ENCODE measurements at regions of chr9 and their contacts with region 1.

Region 1: DNA sequence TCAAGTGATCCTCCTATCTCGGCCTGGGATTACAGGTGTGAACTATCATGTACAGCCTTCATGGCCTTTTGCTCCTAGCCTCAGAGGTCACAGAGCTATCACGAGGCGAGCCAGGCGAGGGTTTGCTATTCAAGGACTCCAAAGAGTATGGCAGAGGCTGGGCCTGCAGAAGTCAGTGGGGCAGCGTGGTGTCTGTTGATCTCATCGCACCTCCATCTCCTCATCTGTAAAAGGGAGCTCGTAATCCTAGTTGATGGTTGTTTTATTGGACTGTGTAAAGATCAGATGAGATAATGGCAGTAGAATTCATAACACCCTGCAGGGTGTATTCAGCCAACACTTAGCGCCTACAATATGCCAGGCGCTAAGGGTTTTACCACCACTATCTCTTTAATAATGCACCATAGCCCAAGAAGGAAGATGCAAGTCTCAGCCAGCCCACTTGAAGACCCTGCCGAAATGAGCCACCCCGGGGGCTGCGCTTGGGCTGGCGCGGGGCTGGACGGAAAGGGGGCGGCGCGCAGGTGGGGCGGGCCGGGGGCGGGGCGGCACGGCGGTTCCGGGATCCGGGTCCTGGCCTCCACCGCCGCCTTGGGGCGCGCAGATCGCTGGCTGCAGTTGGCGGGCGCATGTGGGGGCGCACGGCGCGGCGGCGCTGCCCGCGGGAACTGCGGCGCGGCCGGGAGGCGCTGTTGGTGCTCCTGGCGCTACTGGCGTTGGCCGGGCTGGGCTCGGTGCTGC is at the start of gene GALNT12:
- DNase-seq: peak; percentile 22 to 81 (median 62)
- ATAC-seq: peak; percentile 90
- H3K4me3 ChIP-seq: peak within 1 kb of the TSS; percentile 66 to 68
- H3K4me3 Mint-ChIP-seq: peak within 1 kb of the TSS; percentile 87
- H3K27ac ChIP-seq: no peak within 1 kb of the TSS
- H3K27ac Mint-ChIP-seq: peak within 1 kb of the TSS; percentile 57
- H3K4me1 ChIP-seq: peaks cover 10% of the 10 kb centered on the region
- H3K4me1 Mint-ChIP-seq: peaks cover 27% of the 10 kb centered on the region
- H3K27me3 ChIP-seq: no peaks in the 10 kb centered on the region
- H3K27me3 Mint-ChIP-seq: peaks cover 3% of the 10 kb centered on the region
- CTCF ChIP-seq: no peak
- total RNA-seq, gene GALNT12: 7.9 to 9.0 TPM

Region 2: DNA sequence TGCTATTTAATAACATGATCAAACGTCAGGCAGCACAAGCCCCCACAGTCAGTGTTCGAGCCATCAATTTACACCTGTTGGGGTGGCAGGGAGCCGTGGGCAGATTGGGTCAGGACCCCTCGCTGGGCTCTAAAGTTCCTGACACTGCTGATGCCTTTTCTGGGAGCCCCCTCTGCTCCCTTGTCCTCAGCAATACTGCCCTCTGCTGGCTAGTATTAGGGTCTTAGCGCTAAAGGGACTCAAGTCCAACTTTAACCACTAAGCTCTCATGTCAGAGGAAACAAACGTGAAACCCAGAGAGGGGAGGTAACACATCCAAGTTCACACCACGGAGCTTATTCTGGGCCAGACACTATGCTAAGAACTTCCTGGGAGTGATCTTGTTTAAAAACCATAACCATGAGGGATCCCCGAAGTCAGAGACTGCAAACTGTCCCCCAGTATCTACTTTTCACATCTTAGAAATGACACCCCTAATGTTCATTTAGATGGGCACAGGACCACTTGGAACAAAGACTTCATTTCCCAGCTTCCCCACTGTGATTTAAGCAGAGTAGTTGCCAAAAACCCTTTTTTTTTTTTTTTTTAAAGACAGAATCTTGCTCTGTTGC is 31.3 kb before region 1 on chr9:
- CTCF ChIA-PET with region 1: interaction called, 17 read pairs
- POLR2A ChIA-PET with region 1: no interaction called
- intact Hi-C with region 1: no loop called
- DNase-seq: peak in 4 of 9 experiments; percentile 28 to 59 (median 46)
- ATAC-seq: no peak
- H3K4me3 ChIP-seq: no peak overlapping the region
- H3K4me3 Mint-ChIP-seq: no peak overlapping the region
- H3K27ac ChIP-seq: no peak overlapping the region
- H3K27ac Mint-ChIP-seq: no peak overlapping the region
- H3K4me1 ChIP-seq: no peaks in the 10 kb centered on the region
- H3K4me1 Mint-ChIP-seq: no peaks in the 10 kb centered on the region
- H3K27me3 ChIP-seq: no peaks in the 10 kb centered on the region
- H3K27me3 Mint-ChIP-seq: no peaks in the 10 kb centered on the region
- CTCF ChIP-seq: no peak

Region 3: DNA sequence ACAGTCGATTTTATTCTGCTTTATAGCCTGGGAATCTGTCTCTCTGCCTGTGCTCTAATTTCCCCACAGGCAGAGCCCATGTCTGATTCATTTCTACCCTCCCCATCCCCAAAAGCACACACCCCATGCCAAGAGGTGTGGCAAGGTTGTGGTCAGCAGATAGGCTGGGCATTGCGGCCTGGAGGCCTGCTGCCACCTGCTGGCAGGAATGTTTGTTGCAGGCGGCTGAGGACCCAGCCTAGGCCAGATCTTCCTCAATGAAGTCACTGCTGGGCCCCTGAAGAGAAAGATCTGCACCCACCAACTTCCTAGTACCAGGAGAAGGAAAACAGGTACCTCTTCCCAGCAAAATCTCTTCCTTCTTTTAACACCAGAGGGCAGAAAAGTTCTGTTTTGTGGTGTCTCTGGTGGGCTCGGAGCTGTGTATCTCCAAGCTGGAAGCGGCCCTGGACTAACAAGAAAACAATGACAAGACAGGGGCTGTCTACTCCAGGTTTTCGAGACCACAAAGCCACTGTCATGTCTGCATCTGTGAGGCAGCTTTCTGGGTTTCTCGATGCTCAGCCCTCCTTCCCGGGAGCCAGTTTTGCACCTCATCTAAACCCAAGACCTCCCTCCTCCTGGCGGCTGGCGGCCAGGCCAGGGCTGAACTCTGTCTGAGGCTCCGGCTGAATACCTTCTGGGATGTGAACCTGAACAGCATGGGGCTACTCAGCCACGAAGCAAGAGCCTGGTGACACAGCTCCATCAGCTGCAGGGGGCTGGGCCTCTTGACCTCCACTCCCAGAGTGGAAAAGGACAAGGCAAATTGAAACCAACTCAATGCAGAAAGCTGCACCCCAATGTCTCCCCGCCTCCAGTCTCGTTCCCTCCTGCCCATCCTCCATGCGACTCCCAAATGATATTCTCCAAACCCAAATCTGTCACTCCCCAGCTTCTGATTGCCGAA is 15.8 kb before region 1 on chr9:
- CTCF ChIA-PET with region 1: interaction called, 30 read pairs
- POLR2A ChIA-PET with region 1: interaction called, 5 read pairs
- intact Hi-C with region 1: loop called in 1 of 2 experiments (anchors 1 kb)
- DNase-seq: peak; percentile 21 to 73 (median 53)
- ATAC-seq: peak; percentile 75
- H3K4me3 ChIP-seq: no peak overlapping the region
- H3K4me3 Mint-ChIP-seq: no peak overlapping the region
- H3K27ac ChIP-seq: no peak overlapping the region
- H3K27ac Mint-ChIP-seq: no peak overlapping the region
- H3K4me1 ChIP-seq: peaks cover 15% of the 10 kb centered on the region
- H3K4me1 Mint-ChIP-seq: peaks cover 31% of the 10 kb centered on the region
- H3K27me3 ChIP-seq: no peaks in the 10 kb centered on the region
- H3K27me3 Mint-ChIP-seq: no peaks in the 10 kb centered on the region
- CTCF ChIP-seq: peak; percentile 91

Region 4: DNA sequence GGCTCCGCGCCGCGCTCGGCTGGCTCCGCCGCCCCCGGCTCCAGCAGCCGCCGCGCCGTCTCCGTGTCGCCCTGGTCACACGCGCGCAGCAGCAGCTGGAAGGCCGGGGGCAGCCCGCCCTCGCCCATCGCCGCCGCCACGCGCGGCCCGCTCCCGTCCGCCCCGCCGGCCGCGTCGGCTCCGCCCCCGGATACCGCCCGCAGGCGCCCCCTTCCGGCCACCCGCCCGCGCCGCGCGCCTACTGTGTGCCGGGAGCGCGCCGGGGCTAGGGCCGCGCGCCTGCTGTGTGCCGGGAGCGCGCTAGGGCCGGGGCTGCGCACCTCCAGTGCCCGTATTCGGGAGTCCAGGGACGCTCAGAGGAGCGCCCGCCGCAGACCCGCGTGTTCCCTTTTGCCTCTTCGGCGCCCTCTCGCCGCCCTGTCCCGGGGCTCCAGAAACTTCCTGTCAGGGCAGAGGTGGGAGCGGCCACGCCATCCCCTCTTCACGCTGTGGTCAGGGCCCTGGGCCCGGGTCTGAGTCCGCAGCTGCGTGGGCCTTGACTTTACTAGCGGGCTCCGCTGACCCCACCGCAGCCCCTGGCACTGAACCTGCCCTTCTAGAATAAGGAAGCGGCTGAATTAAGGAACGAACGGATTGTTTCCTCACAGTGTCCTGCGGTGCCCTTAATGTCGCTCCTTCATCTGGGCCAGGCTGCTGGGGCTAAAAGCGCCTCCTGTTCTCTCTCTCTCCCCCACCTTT is 10.7 kb before region 1 on chr9 and contains the start of gene ANKS6:
- CTCF ChIA-PET with region 1: interaction called, 30 read pairs
- POLR2A ChIA-PET with region 1: interaction called, 5 read pairs
- intact Hi-C with region 1: loop called in 1 of 2 experiments (anchors 1 kb)
- DNase-seq: peak; percentile 63 to 91 (median 85)
- ATAC-seq: peak; percentile 92
- H3K4me3 ChIP-seq: peak within 1 kb of the TSS; percentile 77 to 95
- H3K4me3 Mint-ChIP-seq: peak within 1 kb of the TSS; percentile 88
- H3K27ac ChIP-seq: peak within 1 kb of the TSS; percentile 61 to 66
- H3K27ac Mint-ChIP-seq: peak within 1 kb of the TSS; percentile 85
- H3K4me1 ChIP-seq: peaks cover 15% of the 10 kb centered on the region
- H3K4me1 Mint-ChIP-seq: peaks cover 32% of the 10 kb centered on the region
- H3K27me3 ChIP-seq: no peaks in the 10 kb centered on the region
- H3K27me3 Mint-ChIP-seq: no peaks in the 10 kb centered on the region
- CTCF ChIP-seq: peak; percentile 28
- total RNA-seq, gene ANKS6: 10.6 to 12.7 TPM

Region 5: GRCh38 chr9:98944057-98944733 is 137.0 kb after region 1 on chr9:
- CTCF ChIA-PET with region 1: no interaction called
- POLR2A ChIA-PET with region 1: no interaction called
- intact Hi-C with region 1: no loop called
- DNase-seq: no peak
- ATAC-seq: no peak
- H3K4me3 ChIP-seq: no peak overlapping the region
- H3K4me3 Mint-ChIP-seq: peak overlapping the region; percentile 18
- H3K27ac ChIP-seq: no peak overlapping the region
- H3K27ac Mint-ChIP-seq: no peak overlapping the region
- H3K4me1 ChIP-seq: peaks cover 3% of the 10 kb centered on the region
- H3K4me1 Mint-ChIP-seq: peaks cover 5% of the 10 kb centered on the region
- H3K27me3 ChIP-seq: peaks cover 0 to 14% of the 10 kb centered on the region in 2 experiments
- H3K27me3 Mint-ChIP-seq: peaks cover 55% of the 10 kb centered on the region
- CTCF ChIP-seq: no peak

Region 6: GRCh38 chr9:99130069-99130468 is 322.8 kb after region 1 on chr9:
- CTCF ChIA-PET with region 1: interaction called, 3 read pairs
- POLR2A ChIA-PET with region 1: no interaction called
- intact Hi-C with region 1: loop called in 1 of 2 experiments (anchors 10 kb)
- DNase-seq: no peak
- ATAC-seq: no peak
- H3K4me3 ChIP-seq: no peak overlapping the region
- H3K4me3 Mint-ChIP-seq: peak overlapping the region; percentile 38
- H3K27ac ChIP-seq: peak overlapping the region in 1 of 2 experiments; percentile 38
- H3K27ac Mint-ChIP-seq: peak overlapping the region; percentile 85
- H3K4me1 ChIP-seq: peaks cover 88% of the 10 kb centered on the region
- H3K4me1 Mint-ChIP-seq: peaks cover 86% of the 10 kb centered on the region
- H3K27me3 ChIP-seq: no peaks in the 10 kb centered on the region
- H3K27me3 Mint-ChIP-seq: no peaks in the 10 kb centered on the region
- CTCF ChIP-seq: no peak

Region 7: GRCh38 chr9:99221621-99222415 is 414.6 kb after region 1 on chr9 and contains the starts of genes ALG2 and SEC61B:
- CTCF ChIA-PET with region 1: no interaction called
- POLR2A ChIA-PET with region 1: no interaction called
- intact Hi-C with region 1: loop called (anchors 1 to 10 kb)
- DNase-seq: peak; percentile 87 to 96 (median 94)
- ATAC-seq: peak; percentile 88
- H3K4me3 ChIP-seq: peak within 1 kb of the TSS; percentile 79 to 90
- H3K4me3 Mint-ChIP-seq: peak within 1 kb of the TSS; percentile 99
- H3K27ac ChIP-seq: peak within 1 kb of the TSS; percentile 95 to 99
- H3K27ac Mint-ChIP-seq: peak within 1 kb of the TSS; percentile 100
- H3K4me1 ChIP-seq: peaks cover 30% of the 10 kb centered on the region
- H3K4me1 Mint-ChIP-seq: peaks cover 80% of the 10 kb centered on the region
- H3K27me3 ChIP-seq: no peaks in the 10 kb centered on the region
- H3K27me3 Mint-ChIP-seq: no peaks in the 10 kb centered on the region
- CTCF ChIP-seq: no peak
- total RNA-seq, gene ALG2: 21.0 to 24.7 TPM
- total RNA-seq, gene SEC61B: 107 to 108 TPM

Region 8: GRCh38 chr9:99906403-99907207 is 1099.4 kb after region 1 on chr9 and contains the start of gene STX17:
- CTCF ChIA-PET with region 1: no interaction called
- POLR2A ChIA-PET with region 1: no interaction called
- intact Hi-C with region 1: loop called in 1 of 2 experiments (anchors 5 kb)
- DNase-seq: peak; percentile 64 to 92 (median 84)
- ATAC-seq: peak; percentile 85
- H3K4me3 ChIP-seq: peak within 1 kb of the TSS; percentile 95 to 96
- H3K4me3 Mint-ChIP-seq: peak within 1 kb of the TSS; percentile 97
- H3K27ac ChIP-seq: peak within 1 kb of the TSS; percentile 98 to 99
- H3K27ac Mint-ChIP-seq: peak within 1 kb of the TSS; percentile 100
- H3K4me1 ChIP-seq: peaks cover 20% of the 10 kb centered on the region
- H3K4me1 Mint-ChIP-seq: peaks cover 33% of the 10 kb centered on the region
- H3K27me3 ChIP-seq: no peaks in the 10 kb centered on the region
- H3K27me3 Mint-ChIP-seq: no peaks in the 10 kb centered on the region
- CTCF ChIP-seq: no peak
- total RNA-seq, gene STX17: 21.0 to 23.1 TPM